Activated CD4-positive, alpha-beta memory T cell treated with anti-CD3 and anti-CD28 coated beads, Interleukin-2, amount 10 ng/mL, durations not matched to agents 7 days and 5 days (primary cell): ENCODE measurements at regions of chr6 and their contacts with region 1.

Region 1: GRCh38 chr6:25992413-25993037 is 29.9 kb downstream of the TRIM38 start:
- DNase-seq: peak; percentile 94
- H3K4me3 Mint-ChIP-seq: peak overlapping the region; percentile 97
- H3K27ac Mint-ChIP-seq: peak overlapping the region; percentile 78
- H3K4me1 Mint-ChIP-seq: peaks cover 30% of the 10 kb centered on the region
- H3K27me3 Mint-ChIP-seq: no peaks in the 10 kb centered on the region

Region 2: DNA sequence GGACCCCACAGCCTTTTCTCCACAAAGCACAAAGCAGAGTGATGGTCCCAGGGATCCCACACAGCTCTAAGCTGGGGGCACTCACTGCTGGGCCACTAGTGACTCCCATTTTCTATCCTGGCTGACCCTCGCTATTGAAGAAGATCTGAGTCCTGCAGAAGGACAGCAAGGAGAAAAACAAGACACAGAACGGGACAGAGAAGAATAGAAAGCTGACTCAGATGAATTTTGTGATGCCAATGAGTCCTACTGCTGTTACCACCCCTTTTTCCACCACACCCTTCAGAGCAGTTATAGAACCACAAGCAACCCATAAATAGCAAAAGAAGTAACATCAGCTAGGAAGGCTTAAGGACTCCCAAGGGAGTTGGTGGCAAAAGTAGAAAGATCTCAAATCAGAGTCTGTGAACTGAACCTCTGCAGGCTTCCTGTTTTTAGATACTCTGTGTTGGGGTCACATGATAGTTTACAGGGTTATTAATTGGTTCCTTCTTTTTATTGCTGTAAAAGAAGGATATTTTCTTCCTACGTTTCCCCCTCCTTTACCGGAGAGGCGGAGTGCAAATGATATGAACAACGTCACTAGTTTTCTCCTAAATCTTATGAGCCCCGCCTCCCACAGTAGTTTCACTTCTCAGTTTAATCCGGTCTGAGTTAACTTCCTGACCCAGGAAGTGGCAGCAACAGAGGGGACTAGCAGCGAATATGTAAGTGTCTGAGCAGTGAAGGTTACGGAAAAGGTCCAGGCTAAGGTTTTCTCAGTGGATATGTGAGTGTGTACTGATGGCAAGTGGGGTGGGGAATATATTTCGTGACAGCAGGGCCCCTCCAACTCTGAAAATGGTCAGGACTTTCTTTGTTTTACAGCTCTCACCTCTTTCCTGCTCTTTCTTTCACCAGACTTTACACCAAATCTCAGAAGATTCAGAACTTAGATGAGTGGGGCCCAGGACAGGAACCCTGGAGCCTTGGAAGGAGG is 30.1 kb before region 1 on chr6 and contains the start of gene TRIM38:
- CTCF ChIA-PET with region 1: interaction called, 20 read pairs
- POLR2A ChIA-PET with region 1: interaction called, 28 read pairs
- DNase-seq: peak; percentile 84
- H3K4me3 Mint-ChIP-seq: peak within 1 kb of the TSS; percentile 96
- H3K27ac Mint-ChIP-seq: peak within 1 kb of the TSS; percentile 96
- H3K4me1 Mint-ChIP-seq: peaks cover 80% of the 10 kb centered on the region
- H3K27me3 Mint-ChIP-seq: no peaks in the 10 kb centered on the region
- total RNA-seq, gene TRIM38: 32.6 to 33.5 TPM

Region 3: GRCh38 chr6:25981568-25982263 is 10.8 kb before region 1 on chr6:
- CTCF ChIA-PET with region 1: interaction called, 37 read pairs
- POLR2A ChIA-PET with region 1: interaction called, 9 read pairs
- DNase-seq: no peak
- H3K4me3 Mint-ChIP-seq: no peak overlapping the region
- H3K27ac Mint-ChIP-seq: no peak overlapping the region
- H3K4me1 Mint-ChIP-seq: peaks cover 22% of the 10 kb centered on the region
- H3K27me3 Mint-ChIP-seq: no peaks in the 10 kb centered on the region

Region 4: GRCh38 chr6:26012061-26012460 is 19.5 kb after region 1 on chr6:
- CTCF ChIA-PET with region 1: interaction called, 114 read pairs
- POLR2A ChIA-PET with region 1: interaction called, 32 read pairs
- DNase-seq: no peak
- H3K4me3 Mint-ChIP-seq: no peak overlapping the region
- H3K27ac Mint-ChIP-seq: no peak overlapping the region
- H3K4me1 Mint-ChIP-seq: peaks cover 10% of the 10 kb centered on the region
- H3K27me3 Mint-ChIP-seq: no peaks in the 10 kb centered on the region